Common myeloid progenitor, CD34-positive (primary cell): ENCODE measurements at regions of chr1 and their contacts with region 1.

Region 1: DNA sequence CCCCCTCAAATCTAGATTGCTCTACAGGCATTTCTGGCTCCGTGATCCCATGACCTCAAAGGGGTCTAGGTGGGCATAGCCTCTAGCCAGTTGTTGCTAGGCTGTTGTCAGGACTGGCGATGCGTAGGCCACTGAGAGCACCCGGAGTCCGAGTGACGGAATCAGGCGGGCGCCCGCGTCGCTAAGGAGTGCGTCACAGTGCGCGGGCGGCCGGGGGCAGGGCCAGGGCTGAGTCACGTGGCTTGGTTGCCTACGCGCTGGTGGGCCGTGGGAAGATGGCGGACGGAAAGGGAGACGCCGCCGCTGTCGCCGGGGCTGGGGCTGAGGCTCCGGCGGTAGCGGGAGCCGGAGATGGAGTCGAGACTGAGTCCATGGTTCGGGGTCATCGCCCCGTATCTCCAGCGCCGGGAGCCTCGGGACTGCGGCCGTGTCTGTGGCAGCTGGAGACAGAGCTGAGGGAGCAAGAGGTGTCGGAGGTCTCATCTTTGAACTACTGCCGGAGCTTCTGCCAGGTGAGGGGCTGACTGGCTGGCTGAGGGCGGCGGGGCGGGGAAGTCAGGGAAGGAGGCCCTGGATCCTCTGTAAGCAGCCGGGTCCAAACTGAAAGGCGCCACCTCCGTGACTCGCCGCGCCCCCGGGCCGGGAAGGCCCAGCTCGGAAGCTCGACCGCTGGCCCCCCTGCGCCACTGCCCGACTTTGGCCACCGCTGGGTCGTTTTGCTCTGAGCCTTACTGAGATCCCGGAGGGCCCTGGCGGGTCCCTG is at the start of gene RLF:
- DNase-seq: peak; percentile 95 to 98 (median 97)
- H3K4me3 ChIP-seq: peak within 1 kb of the TSS; percentile 82 to 100 (median 97)
- H3K27ac ChIP-seq: peak within 1 kb of the TSS; percentile 94 to 98
- H3K4me1 ChIP-seq: peaks cover 21 to 43% (median 33%) of the 10 kb centered on the region in 4 experiments
- H3K27me3 ChIP-seq: no peaks in the 10 kb centered on the region

Region 2: DNA sequence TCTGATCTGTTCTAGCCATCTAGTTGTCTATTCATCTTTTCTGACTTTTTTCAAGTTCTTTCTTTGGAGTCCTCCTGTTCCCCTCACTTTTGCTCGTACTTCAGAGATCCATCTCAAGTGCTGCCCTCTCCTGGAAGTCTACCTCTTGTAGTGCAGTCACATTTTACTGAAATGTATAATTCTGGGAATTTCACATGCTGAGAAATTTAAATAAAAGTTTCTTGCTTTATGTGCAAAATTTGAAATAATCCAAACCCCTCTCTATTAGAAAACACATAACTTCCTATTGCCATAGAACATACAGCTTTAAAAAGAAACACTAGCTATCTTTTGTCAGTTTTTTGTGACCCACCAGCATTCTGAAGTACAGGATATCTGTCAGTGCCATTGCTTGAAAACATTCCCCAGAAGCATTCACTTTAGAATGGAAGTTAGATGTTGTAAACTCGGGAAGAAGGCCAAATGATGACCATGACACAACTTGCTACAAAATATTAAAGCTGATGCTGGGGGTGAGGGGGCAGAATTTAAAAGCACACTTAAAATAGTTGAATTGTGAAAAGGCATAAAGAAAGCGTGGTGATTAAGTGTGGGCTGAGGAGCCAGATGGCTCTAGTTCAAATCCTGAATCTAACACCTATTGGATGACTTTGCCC is 21.9 kb after region 1 on chr1:
- CTCF ChIA-PET with region 1: interaction called, 81 read pairs
- POLR2A ChIA-PET with region 1: interaction called, 4 read pairs
- DNase-seq: peak; percentile 67 to 79 (median 77)
- H3K4me3 ChIP-seq: no peak overlapping the region
- H3K27ac ChIP-seq: no peak overlapping the region
- H3K4me1 ChIP-seq: peaks cover 0 to 3% (median 3%) of the 10 kb centered on the region in 4 experiments
- H3K27me3 ChIP-seq: no peaks in the 10 kb centered on the region

Region 3: GRCh38 chr1:40344597-40344996 is 183.3 kb after region 1 on chr1:
- CTCF ChIA-PET with region 1: no interaction called
- POLR2A ChIA-PET with region 1: no interaction called
- DNase-seq: peak; percentile 14 to 66 (median 58)
- H3K4me3 ChIP-seq: no peak overlapping the region
- H3K27ac ChIP-seq: no peak overlapping the region
- H3K4me1 ChIP-seq: peaks cover 0 to 12% (median 5%) of the 10 kb centered on the region in 4 experiments
- H3K27me3 ChIP-seq: no peaks in the 10 kb centered on the region